A673 (cell line): ENCODE measurements at regions of chr12 and their contacts with region 1.

Region 1: GRCh38 chr12:85155787-85156186 is 119.6 kb downstream of the LRRIQ1 start:
- DNase-seq: peak; percentile 81
- H3K4me3 ChIP-seq: no peak overlapping the region
- H3K27ac ChIP-seq: peak overlapping the region; percentile 40
- H3K4me1 ChIP-seq: peaks cover 24% of the 10 kb centered on the region
- H3K27me3 ChIP-seq: no peaks in the 10 kb centered on the region
- CTCF ChIP-seq: peak; percentile 70

Region 2: GRCh38 chr12:84874125-84874824 is 281.5 kb before region 1 on chr12:
- CTCF ChIA-PET with region 1: no interaction called
- POLR2A ChIA-PET with region 1: no interaction called
- intact Hi-C with region 1: loop called (anchors 10 kb)
- DNase-seq: peak; percentile 68
- H3K4me3 ChIP-seq: no peak overlapping the region
- H3K27ac ChIP-seq: no peak overlapping the region
- H3K4me1 ChIP-seq: no peaks in the 10 kb centered on the region
- H3K27me3 ChIP-seq: no peaks in the 10 kb centered on the region
- CTCF ChIP-seq: peak; percentile 80

Region 3: DNA sequence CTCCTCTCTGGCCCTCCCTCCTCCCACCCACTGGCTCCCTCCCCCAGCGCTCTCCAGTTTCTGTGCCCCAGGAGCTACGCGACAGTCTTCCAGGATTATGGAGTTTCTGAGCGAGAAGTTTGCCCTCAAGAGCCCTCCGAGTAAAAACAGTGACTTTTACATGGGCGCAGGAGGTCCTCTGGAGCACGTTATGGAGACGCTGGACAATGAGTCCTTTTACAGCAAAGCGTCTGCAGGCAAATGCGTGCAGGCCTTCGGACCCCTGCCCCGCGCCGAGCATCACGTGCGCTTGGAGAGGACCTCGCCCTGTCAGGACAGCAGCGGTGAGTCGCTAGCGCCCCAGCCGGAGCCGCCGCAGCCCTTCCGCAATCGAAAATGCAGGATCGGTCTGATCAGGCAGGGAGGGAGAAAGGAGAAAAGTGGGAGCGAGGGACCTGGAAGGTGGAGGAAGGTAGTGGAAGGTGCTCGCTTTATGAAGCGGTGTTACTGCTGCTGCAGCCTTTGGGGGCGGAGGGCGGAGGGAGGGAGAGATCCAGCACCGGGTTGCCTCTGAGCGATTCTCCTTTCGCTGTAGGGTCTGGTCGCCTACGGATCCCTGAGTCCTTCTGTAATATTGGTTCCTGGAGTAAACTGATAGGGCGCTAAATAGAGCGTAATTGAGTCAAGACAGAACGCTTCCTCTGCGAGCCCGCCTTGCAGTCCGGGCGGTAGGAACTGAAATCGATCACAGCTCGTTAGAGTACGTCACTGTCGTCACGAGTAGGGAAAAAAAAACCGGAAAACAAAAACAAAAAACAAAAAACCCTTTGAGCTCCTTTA is 124.6 kb after region 1 on chr12 and contains the start of gene ALX1:
- CTCF ChIA-PET with region 1: interaction called, 13 read pairs
- POLR2A ChIA-PET with region 1: no interaction called
- intact Hi-C with region 1: loop called (anchors 5 kb)
- DNase-seq: peak; percentile 84
- H3K4me3 ChIP-seq: peak within 1 kb of the TSS; percentile 60
- H3K27ac ChIP-seq: peak within 1 kb of the TSS; percentile 78
- H3K4me1 ChIP-seq: peaks cover 18% of the 10 kb centered on the region
- H3K27me3 ChIP-seq: no peaks in the 10 kb centered on the region
- CTCF ChIP-seq: peak; percentile 26; the same call in 1 of the 2 replicates
- total RNA-seq, gene ALX1: 10.0 and 11.0 TPM in 2 replicates

Region 4: GRCh38 chr12:85448548-85449139 is 292.9 kb after region 1 on chr12:
- CTCF ChIA-PET with region 1: interaction called, 8 read pairs
- POLR2A ChIA-PET with region 1: no interaction called
- intact Hi-C with region 1: loop called (anchors 2 kb)
- DNase-seq: peak; percentile 64
- H3K4me3 ChIP-seq: no peak overlapping the region
- H3K27ac ChIP-seq: no peak overlapping the region
- H3K4me1 ChIP-seq: peaks cover 25% of the 10 kb centered on the region
- H3K27me3 ChIP-seq: no peaks in the 10 kb centered on the region
- CTCF ChIP-seq: peak; percentile 69; the same call in 1 of the 2 replicates

Region 5: GRCh38 chr12:85720308-85721033 is 564.7 kb after region 1 on chr12:
- CTCF ChIA-PET with region 1: no interaction called
- POLR2A ChIA-PET with region 1: no interaction called
- intact Hi-C with region 1: no loop called
- DNase-seq: no peak
- H3K4me3 ChIP-seq: no peak overlapping the region
- H3K27ac ChIP-seq: no peak overlapping the region
- H3K4me1 ChIP-seq: no peaks in the 10 kb centered on the region
- H3K27me3 ChIP-seq: no peaks in the 10 kb centered on the region
- CTCF ChIP-seq: no peak

Region 6: GRCh38 chr12:85872497-85873091 is 716.8 kb after region 1 on chr12:
- CTCF ChIA-PET with region 1: no interaction called
- POLR2A ChIA-PET with region 1: no interaction called
- intact Hi-C with region 1: loop called (anchors 5 kb)
- DNase-seq: peak; percentile 81
- H3K4me3 ChIP-seq: no peak overlapping the region
- H3K27ac ChIP-seq: no peak overlapping the region
- H3K4me1 ChIP-seq: no peaks in the 10 kb centered on the region
- H3K27me3 ChIP-seq: no peaks in the 10 kb centered on the region
- CTCF ChIP-seq: peak; percentile 82